Left ventricle myocardium superior (tissue), 1 donor: ENCODE measurements at regions of chr11 and their contacts with region 1.

Region 1: DNA sequence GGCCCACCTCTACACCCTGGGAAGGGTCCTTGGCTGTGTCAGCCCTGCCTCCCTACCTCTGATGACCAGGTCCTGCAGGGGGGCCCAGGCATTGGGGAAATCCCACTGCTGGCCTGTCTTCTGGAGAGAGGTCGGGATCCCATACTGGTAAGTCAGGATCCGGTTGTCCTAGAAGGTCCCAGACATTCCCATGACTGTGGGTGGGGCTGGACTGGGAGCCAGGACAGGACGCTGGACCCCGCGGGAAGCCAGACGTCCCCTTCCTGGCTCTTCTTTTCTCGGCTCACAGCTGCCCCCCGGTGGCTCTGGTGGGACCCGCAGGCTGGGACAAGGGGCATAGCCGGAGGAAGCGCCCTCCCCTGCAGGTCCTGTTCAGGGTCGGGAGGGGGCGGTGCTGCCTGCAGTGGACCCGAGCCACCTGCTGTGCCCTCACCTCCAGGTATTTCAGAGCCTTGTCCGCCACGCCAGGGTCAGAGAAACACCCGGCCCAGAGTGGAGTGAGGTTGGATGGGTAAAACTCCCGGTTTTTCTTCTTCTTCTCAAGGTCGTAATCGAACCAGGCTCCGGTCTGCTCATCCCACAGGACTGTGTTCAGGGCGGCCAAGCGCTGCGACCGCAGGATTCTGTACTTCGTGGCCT is 20.0 kb downstream of the TREH start:
- DNase-seq: peak; percentile 95
- ATAC-seq: peak; percentile 80

Region 2: DNA sequence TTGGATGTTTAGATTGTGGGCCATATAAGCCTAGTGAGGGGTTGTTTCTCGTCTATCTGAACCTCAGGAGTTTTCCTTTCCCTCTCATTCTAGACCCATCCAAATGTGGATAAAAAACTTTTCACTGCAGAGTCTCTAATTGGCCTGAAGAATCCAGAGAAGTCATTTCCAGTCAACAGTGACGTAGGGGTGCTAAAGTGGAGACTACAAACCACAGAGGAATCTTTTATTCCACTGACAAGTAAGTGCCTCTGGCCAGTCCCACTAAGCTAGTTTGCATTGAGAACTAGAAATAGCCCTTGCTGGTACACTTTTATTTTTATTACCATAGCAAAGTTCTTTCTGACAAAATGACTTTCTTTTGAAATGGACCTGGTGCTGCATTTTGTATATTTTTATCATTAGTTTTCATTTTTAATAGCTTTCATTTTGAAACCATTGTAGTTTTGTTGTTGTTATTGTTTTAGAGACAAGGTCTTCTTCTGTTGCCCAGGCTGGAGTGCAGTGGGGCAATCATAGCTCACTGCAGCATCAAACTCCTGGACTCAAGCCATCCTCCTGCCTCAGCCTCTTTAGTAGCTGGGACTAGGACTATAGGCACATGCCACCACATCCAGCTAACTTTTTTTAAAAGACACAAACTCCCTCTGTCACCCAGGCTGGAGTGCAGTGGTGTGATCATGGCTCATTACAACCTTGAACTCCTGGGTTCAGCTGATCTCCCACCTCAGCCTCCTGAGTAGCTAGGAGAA is 66.6 kb before region 1 on chr11:
- intact Hi-C with region 1: loop called (anchors 10 kb)
- DNase-seq: no peak
- ATAC-seq: peak; percentile 75

Region 3: GRCh38 chr11:119356349-119357031 is 697.1 kb after region 1 on chr11:
- intact Hi-C with region 1: no loop called
- DNase-seq: peak; percentile 89
- ATAC-seq: peak; percentile 69